IMR-90 (cell line): ENCODE measurements at regions of chr2 and their contacts with region 1.

Region 1: GRCh38 chr2:98385050-98385699 is 38.9 kb downstream of the CNGA3 start:
- DNase-seq: peak; percentile 71
- ATAC-seq: peak; percentile 99
- H3K4me3 ChIP-seq: no peak overlapping the region
- H3K27ac ChIP-seq: no peak overlapping the region
- H3K4me1 ChIP-seq: no peaks in the 10 kb centered on the region
- H3K27me3 ChIP-seq: peaks cover 31% of the 10 kb centered on the region
- CTCF ChIP-seq: peak; percentile 99
- POLR2A ChIP-seq: no peak
- RAD21 ChIP-seq: peak; percentile 99

Region 2: GRCh38 chr2:97740590-97741182 is 644.5 kb before region 1 on chr2:
- CTCF ChIA-PET with region 1: interaction called, 9 read pairs
- POLR2A ChIA-PET with region 1: no interaction called
- dilution Hi-C with region 1: no loop called
- in situ Hi-C with region 1: no loop called
- intact Hi-C with region 1: loop called (anchors 1 kb)
- DNase-seq: peak; percentile 14
- ATAC-seq: peak; percentile 84
- H3K4me3 ChIP-seq: no peak overlapping the region
- H3K27ac ChIP-seq: no peak overlapping the region
- H3K4me1 ChIP-seq: peaks cover 2% of the 10 kb centered on the region; the same call in 1 of the 2 replicates
- H3K27me3 ChIP-seq: no peaks in the 10 kb centered on the region; the same call in 1 of the 2 replicates
- CTCF ChIP-seq: peak; percentile 49
- POLR2A ChIP-seq: no peak
- RAD21 ChIP-seq: peak; percentile 44

Region 3: DNA sequence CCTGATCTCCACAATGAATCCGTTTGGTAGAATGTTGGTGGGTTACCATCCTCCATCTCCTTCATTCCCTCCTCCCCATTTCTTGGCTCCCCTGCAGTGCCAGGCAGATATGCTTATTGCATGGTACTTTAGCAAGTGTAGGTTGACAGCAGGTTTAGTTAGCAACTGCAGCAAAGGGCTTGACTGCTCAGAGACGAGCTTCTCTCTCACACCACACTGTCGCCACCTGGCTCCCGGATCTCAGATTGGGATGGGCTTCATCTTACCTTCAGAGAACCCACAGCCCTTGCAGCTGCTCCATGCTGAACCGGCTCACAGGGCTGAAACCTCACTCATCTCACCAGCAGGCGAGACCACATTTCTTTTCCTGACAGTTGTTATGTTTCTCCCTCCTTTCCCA is 209.4 kb before region 1 on chr2:
- CTCF ChIA-PET with region 1: no interaction called
- POLR2A ChIA-PET with region 1: no interaction called
- dilution Hi-C with region 1: no loop called
- in situ Hi-C with region 1: no loop called
- intact Hi-C with region 1: no loop called
- DNase-seq: no peak
- ATAC-seq: no peak
- H3K4me3 ChIP-seq: no peak overlapping the region
- H3K27ac ChIP-seq: no peak overlapping the region
- H3K4me1 ChIP-seq: no peaks in the 10 kb centered on the region
- H3K27me3 ChIP-seq: peaks cover 15% of the 10 kb centered on the region
- CTCF ChIP-seq: no peak
- POLR2A ChIP-seq: no peak
- RAD21 ChIP-seq: no peak

Region 4: DNA sequence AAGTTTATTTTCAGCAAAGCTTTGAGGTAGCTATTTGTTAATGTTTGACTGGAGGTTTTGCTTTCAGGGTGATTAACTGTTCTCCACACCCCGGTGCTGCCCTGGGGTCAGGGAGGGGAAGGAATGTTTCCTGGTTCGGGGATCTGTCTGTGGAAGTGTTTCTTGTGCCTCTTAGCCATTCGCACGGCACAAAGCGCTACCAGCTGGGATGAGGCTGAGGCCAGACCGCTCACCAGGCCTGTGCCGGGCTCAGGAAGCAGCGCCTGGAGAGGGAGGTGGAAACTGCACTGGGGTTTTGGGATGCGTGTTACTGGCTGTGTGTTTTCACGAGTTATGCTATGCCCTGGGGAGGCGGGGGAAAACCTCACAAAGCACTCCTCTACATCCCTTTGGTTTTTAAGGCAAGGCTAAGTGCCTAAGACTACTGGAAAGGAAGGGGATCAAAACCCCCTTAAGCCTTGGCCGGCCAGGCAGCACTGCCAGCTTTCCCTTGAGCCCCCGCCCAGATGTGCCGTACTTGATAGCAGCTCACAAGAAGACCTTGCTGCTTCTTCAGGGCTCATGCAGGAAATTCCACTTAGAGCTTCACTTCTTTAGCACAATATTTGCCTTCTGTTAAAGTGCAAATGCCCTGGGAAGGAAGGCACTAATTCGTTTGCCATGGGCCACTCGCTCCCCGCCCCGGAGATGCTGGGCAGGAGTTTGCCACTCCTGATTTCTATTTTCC is 104.6 kb before region 1 on chr2:
- CTCF ChIA-PET with region 1: no interaction called
- POLR2A ChIA-PET with region 1: no interaction called
- dilution Hi-C with region 1: no loop called
- in situ Hi-C with region 1: no loop called
- intact Hi-C with region 1: loop called (anchors 10 kb)
- DNase-seq: no peak
- ATAC-seq: peak; percentile 46; the same call in 1 of the 2 replicates
- H3K4me3 ChIP-seq: no peak overlapping the region
- H3K27ac ChIP-seq: no peak overlapping the region
- H3K4me1 ChIP-seq: no peaks in the 10 kb centered on the region
- H3K27me3 ChIP-seq: peaks cover 37% of the 10 kb centered on the region
- CTCF ChIP-seq: no peak
- POLR2A ChIP-seq: no peak
- RAD21 ChIP-seq: no peak

Region 5: GRCh38 chr2:98295721-98296414 is 89.3 kb before region 1 on chr2:
- CTCF ChIA-PET with region 1: no interaction called
- POLR2A ChIA-PET with region 1: no interaction called
- dilution Hi-C with region 1: no loop called
- in situ Hi-C with region 1: loop called (anchors 10 kb)
- intact Hi-C with region 1: no loop called
- DNase-seq: no peak
- ATAC-seq: no peak
- H3K4me3 ChIP-seq: no peak overlapping the region
- H3K27ac ChIP-seq: no peak overlapping the region
- H3K4me1 ChIP-seq: no peaks in the 10 kb centered on the region
- H3K27me3 ChIP-seq: peaks cover 19% of the 10 kb centered on the region
- CTCF ChIP-seq: peak; percentile 12; the same call in 1 of the 2 replicates
- POLR2A ChIP-seq: no peak
- RAD21 ChIP-seq: peak; percentile 41